Naive thymus-derived CD4-positive, alpha-beta T cell (primary cell): ENCODE measurements at regions of chr15 and their contacts with region 1.

Region 1: GRCh38 chr15:43285609-43286037 is 18.9 kb upstream of the TGM5 start:
- DNase-seq: peak in 7 of 9 donors; percentile 32 to 68 (median 61)
- ATAC-seq: peak; percentile 88
- H3K4me3 ChIP-seq: no peak overlapping the region
- H3K4me3 Mint-ChIP-seq: no peak overlapping the region
- H3K27ac ChIP-seq: no peak overlapping the region
- H3K27ac Mint-ChIP-seq: peak overlapping the region in 1 of 9 donors; percentile 25
- H3K4me1 ChIP-seq: no peaks in the 10 kb centered on the region
- H3K4me1 Mint-ChIP-seq: peaks cover 0 to 9% (median 4%) of the 10 kb centered on the region in 7 donors
- H3K27me3 ChIP-seq: no peaks in the 10 kb centered on the region
- H3K27me3 Mint-ChIP-seq: peaks cover 0 to 11% (median 5%) of the 10 kb centered on the region in 5 donors

Region 2: DNA sequence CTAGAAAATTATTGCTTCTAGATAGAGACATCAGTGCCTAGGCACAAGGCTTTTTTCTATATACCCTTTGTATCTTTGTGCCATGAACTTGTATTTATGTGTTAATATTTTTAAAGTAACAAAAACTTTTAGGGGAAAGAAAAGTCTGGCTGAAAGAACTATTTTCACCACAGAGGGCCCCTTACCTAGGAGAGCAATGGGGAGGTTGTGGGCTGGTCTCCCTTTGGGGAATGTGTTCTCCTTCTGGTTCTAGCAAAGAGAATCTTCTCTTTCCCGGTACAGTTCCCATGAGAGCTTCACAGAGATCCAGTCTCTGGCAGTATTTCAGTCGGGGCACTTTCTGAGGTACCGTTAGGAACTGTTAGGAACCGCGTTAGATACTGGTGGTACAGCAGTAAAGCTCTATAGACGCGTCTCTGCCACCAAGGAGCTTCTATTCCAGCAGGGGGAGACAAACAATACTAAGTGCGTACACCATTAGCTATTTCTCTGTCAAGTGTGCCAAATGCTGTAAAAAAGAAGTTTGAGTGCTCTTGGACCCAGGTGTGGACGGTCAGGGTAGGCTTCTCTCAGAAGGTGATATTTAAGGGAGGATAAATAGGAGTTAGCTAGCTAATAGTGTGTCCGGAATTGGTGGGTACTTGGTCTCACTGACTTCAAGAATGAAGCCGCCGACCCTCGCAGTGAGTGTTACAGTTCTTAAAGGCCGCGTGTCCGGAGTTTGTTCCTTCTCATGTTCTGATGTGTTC is 60.2 kb before region 1 on chr15:
- CTCF ChIA-PET with region 1: interaction called, 49 read pairs
- POLR2A ChIA-PET with region 1: no interaction called
- intact Hi-C with region 1: loop called (anchors 1 kb)
- DNase-seq: peak in 7 of 9 donors; percentile 29 to 69 (median 56)
- ATAC-seq: peak; percentile 85
- H3K4me3 ChIP-seq: no peak overlapping the region
- H3K4me3 Mint-ChIP-seq: peak overlapping the region in 4 of 10 donors; percentile 1 to 62 (median 28)
- H3K27ac ChIP-seq: no peak overlapping the region
- H3K27ac Mint-ChIP-seq: no peak overlapping the region
- H3K4me1 ChIP-seq: no peaks in the 10 kb centered on the region
- H3K4me1 Mint-ChIP-seq: peaks cover 1 to 9% (median 7%) of the 10 kb centered on the region in 7 donors
- H3K27me3 ChIP-seq: no peaks in the 10 kb centered on the region
- H3K27me3 Mint-ChIP-seq: peaks cover 5 to 24% (median 11%) of the 10 kb centered on the region in 5 donors

Region 3: GRCh38 chr15:43230640-43231115 is 54.9 kb before region 1 on chr15:
- CTCF ChIA-PET with region 1: interaction called, 49 read pairs
- POLR2A ChIA-PET with region 1: no interaction called
- intact Hi-C with region 1: loop called (anchors 1 kb)
- DNase-seq: no peak
- ATAC-seq: no peak
- H3K4me3 ChIP-seq: no peak overlapping the region
- H3K4me3 Mint-ChIP-seq: no peak overlapping the region
- H3K27ac ChIP-seq: no peak overlapping the region
- H3K27ac Mint-ChIP-seq: no peak overlapping the region
- H3K4me1 ChIP-seq: no peaks in the 10 kb centered on the region
- H3K4me1 Mint-ChIP-seq: peaks cover 0 to 9% (median 4%) of the 10 kb centered on the region in 7 donors
- H3K27me3 ChIP-seq: no peaks in the 10 kb centered on the region
- H3K27me3 Mint-ChIP-seq: peaks cover 5 to 16% (median 9%) of the 10 kb centered on the region in 5 donors

Region 4: GRCh38 chr15:43854801-43855200 is 569.2 kb after region 1 on chr15:
- CTCF ChIA-PET with region 1: no interaction called
- POLR2A ChIA-PET with region 1: no interaction called
- intact Hi-C with region 1: no loop called
- DNase-seq: no peak
- ATAC-seq: no peak
- H3K4me3 ChIP-seq: no peak overlapping the region
- H3K4me3 Mint-ChIP-seq: no peak overlapping the region
- H3K27ac ChIP-seq: no peak overlapping the region
- H3K27ac Mint-ChIP-seq: no peak overlapping the region
- H3K4me1 ChIP-seq: no peaks in the 10 kb centered on the region
- H3K4me1 Mint-ChIP-seq: peaks cover 0 to 6% (median 0%) of the 10 kb centered on the region in 7 donors
- H3K27me3 ChIP-seq: no peaks in the 10 kb centered on the region
- H3K27me3 Mint-ChIP-seq: no peaks in the 10 kb centered on the region